H1 (cell line): ENCODE measurements at regions of chr1 and their contacts with region 1.

Region 1: DNA sequence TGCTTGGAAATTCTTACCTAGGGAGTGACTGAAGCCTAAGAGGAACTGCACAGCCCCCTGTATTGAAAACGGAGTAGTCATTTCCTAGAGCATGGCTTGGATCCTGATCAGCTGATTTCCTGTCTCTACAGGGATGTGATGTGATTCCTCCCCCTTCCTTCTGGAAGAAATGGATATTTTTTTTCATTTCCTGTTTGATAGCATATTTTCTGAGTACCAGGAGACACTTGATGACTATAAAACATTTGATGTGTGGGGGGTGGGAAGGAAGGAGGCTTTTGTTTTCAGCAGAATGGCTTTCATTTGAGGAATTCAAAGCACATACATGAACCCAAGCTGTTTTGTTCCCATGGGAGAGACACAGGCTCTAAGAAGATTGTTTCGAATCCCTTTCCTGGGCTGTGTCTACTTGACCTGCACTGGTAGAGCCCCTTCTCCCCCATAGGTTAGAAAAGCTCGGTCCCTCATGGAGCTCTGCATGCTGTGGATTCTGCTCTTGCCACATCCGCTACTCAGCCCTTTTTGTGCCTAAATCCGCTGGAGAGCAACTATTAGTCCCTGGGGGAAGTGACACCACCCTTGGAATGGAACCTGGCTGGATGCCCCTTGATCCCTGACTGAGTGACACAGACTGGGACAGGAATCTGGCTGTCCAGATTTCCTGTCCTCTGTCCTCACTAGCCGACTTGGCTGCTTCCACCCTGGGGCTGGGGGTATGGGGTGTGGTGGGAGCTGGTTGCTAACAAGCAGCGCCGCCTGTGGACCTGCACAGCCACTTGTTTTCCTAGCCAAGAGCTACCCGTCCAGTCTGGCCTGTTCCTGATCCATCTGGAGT is 71.8 kb upstream of the MACF1 start:
- DNase-seq: peak; percentile 65 to 78
- H3K4me3 ChIP-seq: peak overlapping the region in 1 of 4 experiments; percentile 23; a peak in 1 of 8 replicates
- H3K27ac ChIP-seq: peak overlapping the region; percentile 84
- H3K4me1 ChIP-seq: peaks cover 6 to 33% (median 21%) of the 10 kb centered on the region in 4 experiments
- H3K27me3 ChIP-seq: no peaks in the 10 kb centered on the region
- CTCF ChIP-seq: peak; percentile 39 to 74 (median 57)
- EP300 ChIP-seq: peak in 1 of 2 experiments; percentile 88; a peak in 1 of 3 replicates
- POLR2A ChIP-seq: peak in 1 of 2 experiments; percentile 29; a peak in 1 of 3 replicates
- RAD21 ChIP-seq: peak; percentile 50 to 58

Region 2: GRCh38 chr1:39026051-39026865 is 106.5 kb before region 1 on chr1 and contains the start of gene NDUFS5:
- CTCF ChIA-PET with region 1: no interaction called
- POLR2A ChIA-PET with region 1: no interaction called
- DNase-seq: peak; percentile 72 to 85
- H3K4me3 ChIP-seq: peak within 1 kb of the TSS; percentile 85 to 98 (median 90)
- H3K27ac ChIP-seq: peak within 1 kb of the TSS; percentile 92
- H3K4me1 ChIP-seq: peaks cover 0 to 3% (median 2%) of the 10 kb centered on the region in 4 experiments; a peak in 1 of 7 replicates
- H3K27me3 ChIP-seq: no peaks in the 10 kb centered on the region; a peak in 1 of 7 replicates
- CTCF ChIP-seq: no peak
- EP300 ChIP-seq: no peak
- POLR2A ChIP-seq: peak; percentile 95 to 99
- RAD21 ChIP-seq: no peak
- total RNA-seq, gene NDUFS5: 421 and 435 TPM in 2 replicates

Region 3: DNA sequence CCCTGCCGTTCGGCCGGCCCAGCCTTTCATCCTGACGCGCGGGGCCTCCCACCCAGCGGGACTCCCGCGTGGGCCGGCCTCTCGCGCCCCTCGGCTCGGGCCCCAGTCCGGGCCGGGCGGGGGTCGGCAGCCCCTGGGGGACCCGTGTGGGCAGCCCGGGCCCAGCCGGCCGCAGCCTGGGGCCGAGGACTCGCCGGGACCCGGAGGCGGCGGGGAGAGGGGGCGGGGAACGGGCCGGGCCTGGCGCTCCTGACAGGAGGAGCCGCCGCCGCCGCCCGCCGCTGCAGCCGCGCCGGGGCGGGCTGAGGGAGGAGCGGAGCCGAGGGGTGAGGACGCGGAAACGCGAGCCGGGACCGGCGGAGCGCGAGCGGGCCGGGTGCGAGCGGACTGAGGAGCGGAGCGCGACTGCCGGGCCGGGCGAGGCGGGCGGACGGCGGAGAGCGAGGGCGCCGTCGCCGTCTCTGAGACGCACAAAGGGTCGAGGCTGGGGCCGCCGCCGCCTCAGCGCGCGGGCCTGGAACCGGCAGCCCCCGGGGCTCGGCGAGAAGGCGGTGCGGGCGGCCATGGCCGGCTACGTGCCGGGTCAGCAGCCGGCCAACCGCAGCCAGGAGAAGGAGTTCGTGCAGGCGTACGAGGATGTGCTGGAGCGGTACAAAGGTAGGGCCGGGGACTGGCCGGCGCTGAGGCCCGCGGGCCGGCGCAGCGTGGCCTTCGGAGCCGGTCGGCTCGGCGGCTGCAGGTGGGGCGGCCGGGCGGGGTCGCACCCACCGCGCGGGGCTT is 27.5 kb before region 1 on chr1:
- CTCF ChIA-PET with region 1: interaction called, 26 read pairs
- POLR2A ChIA-PET with region 1: interaction called, 71 read pairs
- DNase-seq: peak in 1 of 2 experiments; percentile 67
- H3K4me3 ChIP-seq: peak overlapping the region; percentile 84 to 94 (median 92)
- H3K27ac ChIP-seq: peak overlapping the region; percentile 86
- H3K4me1 ChIP-seq: peaks cover 23 to 37% (median 25%) of the 10 kb centered on the region in 4 experiments
- H3K27me3 ChIP-seq: no peaks in the 10 kb centered on the region
- CTCF ChIP-seq: no peak
- EP300 ChIP-seq: no peak
- POLR2A ChIP-seq: no peak
- RAD21 ChIP-seq: no peak

Region 4: DNA sequence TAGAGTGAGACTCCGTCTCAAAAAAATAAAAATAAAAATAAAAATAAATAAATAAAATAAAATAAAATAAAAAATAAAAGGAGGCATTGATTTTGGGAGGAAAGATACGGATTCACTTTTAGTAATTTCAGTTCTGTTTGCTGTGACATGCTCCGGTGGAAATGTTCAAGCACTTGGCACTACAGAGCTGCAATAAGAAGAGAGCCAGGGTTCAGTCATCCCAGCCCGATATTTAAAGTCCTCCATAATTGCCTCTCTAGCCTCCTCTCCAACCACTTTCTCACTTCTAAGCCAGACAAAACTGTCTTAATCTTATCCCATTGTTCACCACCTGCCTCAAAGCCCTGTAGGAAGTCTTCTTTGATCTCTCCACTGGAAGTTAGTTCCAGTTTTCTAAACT is 16.8 kb after region 1 on chr1:
- CTCF ChIA-PET with region 1: interaction called, 7 read pairs
- POLR2A ChIA-PET with region 1: interaction called, 13 read pairs
- DNase-seq: no peak
- H3K4me3 ChIP-seq: no peak overlapping the region
- H3K27ac ChIP-seq: no peak overlapping the region
- H3K4me1 ChIP-seq: peaks cover 1 to 28% (median 22%) of the 10 kb centered on the region in 4 experiments
- H3K27me3 ChIP-seq: no peaks in the 10 kb centered on the region
- CTCF ChIP-seq: no peak
- EP300 ChIP-seq: no peak
- POLR2A ChIP-seq: no peak
- RAD21 ChIP-seq: no peak

Region 5: DNA sequence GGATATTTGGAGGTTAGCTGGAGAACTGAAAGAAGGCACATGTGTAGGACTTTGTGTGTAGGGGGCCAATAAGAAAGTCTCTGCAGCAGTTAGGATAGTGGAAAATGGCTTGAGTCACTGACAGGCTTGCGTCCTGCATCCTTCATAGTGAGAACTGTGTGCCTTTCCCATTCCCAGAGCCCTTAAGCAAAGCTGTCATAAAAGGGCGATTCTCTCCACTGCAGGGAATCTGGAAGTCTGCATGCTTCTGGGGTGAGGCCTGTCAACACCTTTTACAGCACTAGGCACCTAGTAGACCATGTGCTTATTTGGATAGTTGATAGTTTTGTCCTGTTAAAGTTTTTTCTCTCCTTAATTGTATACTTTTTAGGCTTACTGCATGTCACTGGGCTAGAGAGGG is 32.3 kb after region 1 on chr1:
- CTCF ChIA-PET with region 1: interaction called, 60 read pairs
- POLR2A ChIA-PET with region 1: interaction called, 10 read pairs
- DNase-seq: no peak
- H3K4me3 ChIP-seq: no peak overlapping the region
- H3K27ac ChIP-seq: no peak overlapping the region
- H3K4me1 ChIP-seq: peaks cover 5 to 21% (median 12%) of the 10 kb centered on the region in 4 experiments; a peak in 5 of 7 replicates
- H3K27me3 ChIP-seq: no peaks in the 10 kb centered on the region
- CTCF ChIP-seq: no peak
- EP300 ChIP-seq: no peak
- POLR2A ChIP-seq: no peak
- RAD21 ChIP-seq: no peak

Region 6: GRCh38 chr1:39183503-39184353 is 51.0 kb after region 1 on chr1:
- CTCF ChIA-PET with region 1: interaction called, 195 read pairs
- POLR2A ChIA-PET with region 1: no interaction called
- DNase-seq: peak in 1 of 2 experiments; percentile 59
- H3K4me3 ChIP-seq: no peak overlapping the region
- H3K27ac ChIP-seq: no peak overlapping the region
- H3K4me1 ChIP-seq: peaks cover 2 to 9% (median 3%) of the 10 kb centered on the region in 4 experiments; a peak in 4 of 7 replicates
- H3K27me3 ChIP-seq: no peaks in the 10 kb centered on the region
- CTCF ChIP-seq: peak; percentile 38 to 66 (median 58)
- EP300 ChIP-seq: no peak
- POLR2A ChIP-seq: no peak
- RAD21 ChIP-seq: peak; percentile 55 to 61